ENCODE measurements at regions of chr5 and their contacts with region 1.

Region 1: GRCh38 chr5:116574367-116575325 is at the start of gene SEMA6A:
- DNase-seq: peak; percentile 91
- H3K4me3 ChIP-seq: peak within 1 kb of the TSS; percentile 61
- H3K27ac ChIP-seq: no peak within 1 kb of the TSS
- H3K4me1 ChIP-seq: peaks cover 14% of the 10 kb centered on the region
- H3K27me3 ChIP-seq: peaks cover 40% of the 10 kb centered on the region
- CTCF ChIP-seq: no peak
- total RNA-seq, gene SEMA6A: 10.6 and 13.5 TPM in 2 replicates

Region 2: GRCh38 chr5:116654925-116655324 is 80.3 kb after region 1 on chr5:
- CTCF ChIA-PET with region 1: interaction called, 3 read pairs
- POLR2A ChIA-PET with region 1: no interaction called
- intact Hi-C with region 1: loop called (anchors 2 kb)
- DNase-seq: peak; percentile 92
- H3K4me3 ChIP-seq: no peak overlapping the region
- H3K27ac ChIP-seq: peak overlapping the region; percentile 82
- H3K4me1 ChIP-seq: peaks cover 67% of the 10 kb centered on the region
- H3K27me3 ChIP-seq: no peaks in the 10 kb centered on the region
- CTCF ChIP-seq: no peak

Region 3: DNA sequence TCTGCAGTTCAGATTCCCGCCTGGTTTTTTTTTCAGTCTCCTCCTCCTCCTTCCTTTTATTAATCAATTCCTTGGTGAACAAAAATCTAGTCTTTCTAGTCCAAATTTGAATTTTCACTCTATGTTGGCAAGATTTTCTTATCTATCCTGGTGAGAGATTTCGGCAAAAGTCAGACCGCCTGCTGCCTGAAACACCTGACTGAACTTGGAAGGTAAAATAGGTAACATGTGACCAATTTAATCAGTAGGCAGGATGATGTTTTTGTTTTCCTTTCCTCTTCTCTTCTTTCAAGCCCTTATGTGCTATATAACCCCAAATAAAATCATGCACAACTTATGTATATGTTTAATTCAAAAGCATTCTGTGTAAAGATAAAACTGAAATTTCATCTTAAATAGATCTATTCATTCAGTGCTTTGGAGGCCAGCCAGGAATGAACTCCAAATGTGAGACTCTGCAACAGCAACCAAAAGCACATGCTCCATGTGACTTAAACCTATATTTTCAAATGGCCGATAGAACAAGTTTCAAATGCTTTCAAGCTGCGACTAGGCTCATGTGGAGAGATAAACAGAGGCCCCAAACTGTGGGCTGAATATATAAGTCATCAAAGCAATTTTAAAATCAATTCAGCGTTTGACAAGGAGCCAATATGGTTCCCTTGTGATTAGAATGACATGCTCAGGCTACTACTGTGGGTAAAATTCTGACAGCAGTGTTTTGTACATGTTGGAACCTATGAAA is 100.4 kb after region 1 on chr5:
- CTCF ChIA-PET with region 1: no interaction called
- POLR2A ChIA-PET with region 1: no interaction called
- intact Hi-C with region 1: no loop called
- DNase-seq: no peak
- H3K4me3 ChIP-seq: no peak overlapping the region
- H3K27ac ChIP-seq: no peak overlapping the region
- H3K4me1 ChIP-seq: no peaks in the 10 kb centered on the region
- H3K27me3 ChIP-seq: no peaks in the 10 kb centered on the region
- CTCF ChIP-seq: no peak

Region 4: GRCh38 chr5:116766470-116766947 is 191.9 kb after region 1 on chr5:
- CTCF ChIA-PET with region 1: no interaction called
- POLR2A ChIA-PET with region 1: no interaction called
- intact Hi-C with region 1: loop called (anchors 10 kb)
- DNase-seq: peak; percentile 81
- H3K4me3 ChIP-seq: no peak overlapping the region
- H3K27ac ChIP-seq: peak overlapping the region; percentile 35
- H3K4me1 ChIP-seq: peaks cover 21% of the 10 kb centered on the region
- H3K27me3 ChIP-seq: no peaks in the 10 kb centered on the region
- CTCF ChIP-seq: no peak

Region 5: DNA sequence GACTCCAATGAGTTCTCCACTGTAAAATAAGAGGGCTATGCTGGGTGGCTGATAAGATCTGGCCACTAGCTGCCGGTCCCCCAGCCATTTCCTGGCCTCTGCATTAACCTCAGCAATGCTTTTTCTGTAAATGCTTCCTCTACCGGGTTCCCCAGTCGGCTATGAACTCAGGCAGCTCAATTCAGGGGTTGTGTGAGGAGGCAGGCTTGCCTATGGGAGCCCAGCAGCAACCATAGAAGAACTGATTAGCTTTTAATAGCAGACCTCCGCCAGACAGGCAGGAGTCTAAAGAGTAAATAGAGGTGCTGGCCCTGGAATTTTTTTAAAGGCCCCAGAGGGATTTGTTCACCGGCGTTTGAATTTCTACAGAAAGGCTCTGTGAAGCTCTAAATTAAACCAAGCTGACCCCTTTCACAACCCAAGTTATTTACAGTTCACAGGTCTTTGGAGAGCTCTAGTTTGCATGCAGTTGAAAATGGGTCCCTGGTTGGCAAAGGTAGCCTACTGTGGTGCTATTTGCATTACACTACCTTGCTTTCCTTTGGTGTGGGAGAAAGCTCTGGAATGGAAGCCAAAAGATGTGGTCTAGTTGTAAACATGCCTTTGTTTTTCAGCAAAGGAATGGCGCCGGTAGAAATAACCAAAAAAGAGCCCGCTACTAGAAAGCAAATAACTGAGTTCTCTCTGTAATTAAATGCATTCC is 289.6 kb after region 1 on chr5:
- CTCF ChIA-PET with region 1: no interaction called
- POLR2A ChIA-PET with region 1: no interaction called
- intact Hi-C with region 1: loop called (anchors 10 kb)
- DNase-seq: no peak
- H3K4me3 ChIP-seq: no peak overlapping the region
- H3K27ac ChIP-seq: no peak overlapping the region
- H3K4me1 ChIP-seq: no peaks in the 10 kb centered on the region
- H3K27me3 ChIP-seq: no peaks in the 10 kb centered on the region
- CTCF ChIP-seq: no peak

Region 6: GRCh38 chr5:116947691-116948528 is 373.3 kb after region 1 on chr5:
- CTCF ChIA-PET with region 1: no interaction called
- POLR2A ChIA-PET with region 1: no interaction called
- intact Hi-C with region 1: loop called (anchors 1 kb)
- DNase-seq: peak; percentile 78
- H3K4me3 ChIP-seq: no peak overlapping the region
- H3K27ac ChIP-seq: no peak overlapping the region
- H3K4me1 ChIP-seq: no peaks in the 10 kb centered on the region
- H3K27me3 ChIP-seq: no peaks in the 10 kb centered on the region
- CTCF ChIP-seq: peak; percentile 77

Region 7: GRCh38 chr5:117077142-117077541 is 502.5 kb after region 1 on chr5:
- CTCF ChIA-PET with region 1: no interaction called
- POLR2A ChIA-PET with region 1: no interaction called
- intact Hi-C with region 1: loop called (anchors 10 kb)
- DNase-seq: no peak
- H3K4me3 ChIP-seq: no peak overlapping the region
- H3K27ac ChIP-seq: no peak overlapping the region
- H3K4me1 ChIP-seq: no peaks in the 10 kb centered on the region
- H3K27me3 ChIP-seq: no peaks in the 10 kb centered on the region
- CTCF ChIP-seq: peak; percentile 64

Measured in A673 (cell line).